RWPE1 (cell line): ENCODE measurements at regions of chr5 and their contacts with region 1.

Region 1: DNA sequence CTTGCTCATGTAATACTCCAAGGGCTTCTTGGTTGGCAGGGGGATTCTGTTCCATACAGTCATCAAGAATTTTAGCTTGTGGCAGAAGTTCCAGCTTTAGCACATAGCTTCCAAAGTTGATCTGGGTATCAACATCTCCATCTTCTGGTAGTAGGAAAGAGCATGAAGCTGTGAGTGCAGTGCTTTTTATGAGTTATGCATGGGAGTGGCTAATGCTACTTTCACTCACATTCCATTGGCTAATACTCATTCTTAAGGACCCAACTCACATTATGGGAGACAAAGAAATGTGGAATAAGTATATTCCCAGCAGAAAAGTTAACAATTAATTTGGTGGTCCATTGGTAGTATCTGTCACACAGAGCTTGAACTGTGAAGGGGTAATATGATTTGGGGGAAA is 194.2 kb upstream of the CHD1 start:
- DNase-seq: peak; percentile 19
- H3K27ac ChIP-seq: no peak overlapping the region
- CTCF ChIP-seq: no peak

Region 2: GRCh38 chr5:98839469-98840383 is 283.2 kb before region 1 on chr5:
- CTCF ChIA-PET with region 1: no interaction called
- POLR2A ChIA-PET with region 1: no interaction called
- DNase-seq: no peak
- H3K27ac ChIP-seq: no peak overlapping the region
- CTCF ChIP-seq: peak; percentile 55

Region 3: DNA sequence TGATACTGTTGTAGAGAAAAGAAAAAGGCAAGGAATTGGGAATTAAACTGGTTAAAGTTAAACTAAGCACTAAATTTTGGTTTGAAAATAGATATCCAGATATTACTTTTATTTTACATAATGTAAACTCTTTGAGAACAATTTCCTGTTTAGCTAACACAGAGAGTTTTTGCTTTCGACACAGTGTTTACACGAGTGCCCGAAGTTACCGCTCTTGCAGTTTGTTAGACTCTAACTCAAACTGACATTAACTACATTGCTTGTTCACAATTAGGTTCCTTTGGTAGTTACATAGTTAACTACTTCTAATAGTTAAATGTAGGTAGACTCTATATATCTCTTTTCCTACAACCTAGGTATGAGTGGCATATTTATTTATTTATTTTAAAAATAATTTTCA is 77.1 kb before region 1 on chr5:
- CTCF ChIA-PET with region 1: no interaction called
- POLR2A ChIA-PET with region 1: no interaction called
- DNase-seq: no peak
- H3K27ac ChIP-seq: no peak overlapping the region
- CTCF ChIP-seq: no peak

Region 4: DNA sequence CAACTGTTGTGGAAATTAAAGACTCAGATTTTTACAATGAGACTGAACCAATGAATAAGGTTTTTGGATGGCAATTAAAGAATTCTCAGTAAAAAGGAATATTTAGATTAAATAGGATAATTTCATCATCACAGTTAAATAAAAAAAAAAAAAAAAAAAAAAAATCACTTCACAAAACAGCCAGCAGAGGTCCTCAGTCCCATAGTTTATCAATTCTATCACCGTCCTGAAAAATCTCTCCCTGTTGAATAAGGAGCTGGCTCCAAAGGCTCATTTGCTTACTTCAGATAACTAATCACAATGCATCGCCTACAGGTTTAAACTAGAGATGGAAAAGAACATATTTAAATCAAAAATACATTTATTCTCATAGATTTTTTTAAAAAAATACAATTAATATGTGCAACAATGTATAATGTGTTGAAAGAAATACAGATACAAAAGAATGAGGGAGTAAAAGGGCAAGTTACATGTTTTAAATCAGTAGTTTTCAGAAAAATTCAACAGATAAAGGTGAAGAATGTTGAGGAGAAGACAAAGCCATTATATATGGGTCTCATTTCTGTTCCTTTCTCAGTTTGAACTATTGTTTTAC is 18.3 kb before region 1 on chr5:
- CTCF ChIA-PET with region 1: interaction called, 10 read pairs
- POLR2A ChIA-PET with region 1: no interaction called
- DNase-seq: peak; percentile 40
- H3K27ac ChIP-seq: no peak overlapping the region
- CTCF ChIP-seq: peak; percentile 78